H1 (cell line): ENCODE measurements at regions of chrX and their contacts with region 1.

Region 1: DNA sequence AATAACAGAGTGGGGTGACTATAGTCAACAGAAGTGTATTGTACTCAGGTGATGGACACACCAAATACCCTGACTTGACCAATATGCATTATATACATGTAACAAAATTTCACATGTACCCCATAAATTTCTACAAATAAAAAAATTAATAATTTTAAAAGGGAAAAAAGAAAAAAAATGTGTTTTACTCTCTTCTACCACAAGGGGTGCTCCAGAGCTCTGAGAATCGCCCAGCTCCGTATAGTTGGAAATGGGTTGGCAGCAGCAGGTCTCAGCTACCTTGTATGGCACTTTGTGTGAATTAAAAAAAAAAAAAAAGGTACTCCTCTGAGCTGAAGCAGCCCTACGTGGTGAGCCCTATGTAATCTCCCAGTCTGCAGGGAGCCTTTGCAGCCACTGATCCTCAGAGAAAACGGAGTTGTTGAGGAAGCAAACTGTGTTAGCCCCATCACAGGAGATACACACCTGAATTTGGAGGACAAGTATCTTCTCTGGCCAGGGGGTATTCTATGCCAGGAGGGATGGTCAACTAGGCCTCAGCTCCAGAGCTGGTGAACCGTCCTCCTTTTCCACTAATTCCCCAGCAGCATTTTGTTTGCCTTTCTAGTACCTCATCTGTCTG is 17.2 kb upstream of the POLA1 start:
- DNase-seq: no peak
- H3K4me3 ChIP-seq: no peak overlapping the region
- H3K27ac ChIP-seq: no peak overlapping the region
- H3K4me1 ChIP-seq: peaks cover 0 to 10% (median 3%) of the 10 kb centered on the region in 4 experiments; a peak in 4 of 7 replicates
- H3K27me3 ChIP-seq: no peaks in the 10 kb centered on the region
- CTCF ChIP-seq: peak; percentile 8 to 15 (median 15); a peak in 3 of 4 replicates
- EP300 ChIP-seq: no peak
- POLR2A ChIP-seq: no peak
- RAD21 ChIP-seq: peak; percentile 22 to 32; a peak in 3 of 4 replicates

Region 2: DNA sequence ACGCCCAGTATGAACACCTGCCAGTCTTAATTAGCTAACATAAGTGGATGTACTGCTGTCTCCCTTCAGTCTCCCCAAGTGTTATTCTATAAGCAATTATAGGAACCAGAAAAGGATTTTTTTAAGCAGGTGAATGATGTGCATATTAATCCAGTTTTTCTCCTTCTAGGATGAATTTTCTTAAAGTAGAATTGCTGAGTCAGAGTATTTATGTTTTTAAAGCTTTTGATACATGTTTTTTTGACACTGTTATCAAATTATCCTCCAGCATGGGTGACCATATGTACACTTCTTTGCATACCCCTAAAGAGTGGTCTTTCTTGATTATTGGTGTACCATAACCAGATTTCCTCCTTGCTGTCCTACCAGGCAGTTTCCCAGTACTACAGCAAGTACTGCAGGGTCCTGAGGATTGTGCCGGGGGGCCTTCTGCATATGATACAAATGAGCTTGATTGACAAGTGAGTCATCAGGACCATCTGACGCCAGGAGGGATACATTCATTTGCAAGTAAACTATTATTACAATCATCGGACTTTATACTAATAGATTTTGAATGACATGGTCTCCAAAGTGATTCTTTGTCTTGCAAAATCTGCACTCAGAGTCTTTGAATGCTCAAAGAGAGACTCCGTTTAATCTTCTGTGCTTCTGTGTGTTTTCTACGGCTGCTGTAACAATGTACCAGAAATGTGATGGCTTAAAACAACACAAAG is 18.7 kb before region 1 on chrX:
- CTCF ChIA-PET with region 1: interaction called, 10 read pairs
- POLR2A ChIA-PET with region 1: no interaction called
- DNase-seq: no peak
- H3K4me3 ChIP-seq: no peak overlapping the region
- H3K27ac ChIP-seq: no peak overlapping the region
- H3K4me1 ChIP-seq: no peaks in the 10 kb centered on the region; a peak in 1 of 7 replicates
- H3K27me3 ChIP-seq: no peaks in the 10 kb centered on the region
- CTCF ChIP-seq: no peak
- EP300 ChIP-seq: no peak
- POLR2A ChIP-seq: no peak
- RAD21 ChIP-seq: no peak